ENCODE measurements at regions of chr2 and their contacts with region 1.

Region 1: DNA sequence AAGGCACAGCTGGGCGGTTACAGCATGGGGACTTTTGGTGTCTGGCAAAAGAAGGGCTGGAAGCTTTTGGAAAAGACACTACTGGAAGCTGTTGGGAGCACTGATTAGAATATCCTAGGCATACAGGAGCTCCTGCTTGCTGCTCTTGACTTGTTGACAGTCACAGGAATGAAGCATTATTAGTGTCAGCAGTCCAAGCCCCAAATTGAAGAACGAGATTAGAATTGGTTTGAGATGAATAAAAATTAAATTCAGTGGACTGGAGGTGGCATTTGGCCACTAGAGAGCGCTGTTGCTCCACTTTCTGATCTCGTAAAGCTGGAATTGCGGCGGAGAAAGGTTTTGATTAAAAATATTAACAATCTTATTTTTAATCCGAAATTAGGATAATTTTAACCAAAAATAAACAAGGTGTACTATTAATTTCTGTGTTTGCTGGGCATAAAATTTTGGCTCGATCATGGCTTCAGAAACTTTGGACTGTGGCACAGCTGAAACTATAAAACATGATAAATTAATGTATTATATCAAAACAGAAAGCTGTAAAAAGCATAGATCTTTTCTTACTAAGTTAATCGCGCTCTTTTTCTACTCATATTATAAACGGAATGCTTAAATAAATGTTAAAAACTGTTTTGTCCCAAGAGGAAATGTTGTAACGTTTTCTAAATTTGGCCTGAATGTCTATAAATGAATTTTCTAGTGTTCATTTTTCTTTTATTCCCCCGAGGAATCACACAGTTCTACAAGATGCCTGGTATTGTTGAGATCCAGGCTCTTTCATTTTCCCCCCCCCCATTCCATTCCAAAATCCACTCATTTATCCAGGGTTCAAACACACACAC is 2.4 kb upstream of the HOXD8 start:
- DNase-seq: peak; percentile 70
- ATAC-seq: no peak

Region 2: GRCh38 chr2:176638167-176639015 is 511.2 kb after region 1 on chr2:
- intact Hi-C with region 1: loop called (anchors 2 to 5 kb)
- DNase-seq: peak; percentile 74
- ATAC-seq: peak; percentile 94 to 95

Region 3: GRCh38 chr2:176653479-176654443 is 526.6 kb after region 1 on chr2:
- intact Hi-C with region 1: loop called in 1 of 2 experiments (anchors 1 kb)
- DNase-seq: peak; percentile 52
- ATAC-seq: peak; percentile 88 to 91

Region 4: DNA sequence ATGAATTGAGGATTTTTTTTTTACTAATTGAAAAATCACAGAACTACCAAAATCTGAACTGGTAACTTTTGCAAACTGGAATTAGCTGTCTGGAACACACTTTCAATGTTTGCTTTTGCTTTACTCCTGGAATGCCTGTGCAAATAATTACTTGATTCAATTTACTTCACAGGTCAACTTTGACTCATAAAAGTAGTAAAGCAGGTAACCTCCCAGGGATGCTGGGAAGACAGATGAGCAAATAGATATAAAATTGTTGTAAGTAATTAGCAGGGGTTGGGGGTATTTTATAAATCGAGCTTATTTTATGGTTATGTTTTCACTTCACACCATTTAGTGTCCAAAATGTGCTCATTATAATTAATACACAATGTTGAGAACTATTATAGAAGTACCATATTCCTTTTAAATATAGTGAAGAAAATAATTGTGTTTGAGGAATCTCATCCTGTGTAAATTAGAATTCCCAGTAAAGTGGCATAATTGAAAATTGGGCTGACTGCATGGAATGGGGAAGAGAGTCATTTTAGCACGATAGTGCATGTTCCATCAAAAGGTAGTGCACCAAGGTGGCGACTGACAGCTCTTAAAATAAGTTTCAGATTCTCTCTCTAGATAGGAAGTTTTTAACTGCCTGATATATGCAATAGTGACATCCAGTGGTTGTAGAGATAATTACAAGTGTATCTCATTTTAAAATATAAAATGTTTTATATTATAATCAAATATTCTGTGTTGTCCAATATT is 687.3 kb after region 1 on chr2:
- intact Hi-C with region 1: loop called in 1 of 2 experiments (anchors 10 kb)
- DNase-seq: no peak
- ATAC-seq: peak in 1 of 2 donors; percentile 38

Region 5: DNA sequence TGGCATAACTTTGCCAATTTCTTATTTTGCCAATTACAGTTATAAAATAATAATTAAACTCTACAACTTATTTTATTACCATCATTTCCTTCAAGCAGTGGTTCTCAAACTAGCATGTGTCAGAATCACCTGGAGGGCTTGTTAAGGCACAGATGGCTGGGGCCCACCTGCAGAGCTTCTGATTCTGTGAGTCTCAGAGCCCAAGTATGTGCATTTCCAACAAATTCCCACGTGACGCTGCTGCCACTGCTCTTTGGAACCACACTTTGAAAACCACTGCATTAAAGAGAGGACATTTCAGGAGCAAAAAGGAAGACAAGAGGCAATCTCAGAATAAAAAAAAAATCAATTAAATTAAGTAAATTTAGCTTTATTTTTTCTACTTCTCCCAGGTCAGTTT is 991.5 kb after region 1 on chr2:
- intact Hi-C with region 1: no loop called
- DNase-seq: no peak
- ATAC-seq: no peak

Region 6: DNA sequence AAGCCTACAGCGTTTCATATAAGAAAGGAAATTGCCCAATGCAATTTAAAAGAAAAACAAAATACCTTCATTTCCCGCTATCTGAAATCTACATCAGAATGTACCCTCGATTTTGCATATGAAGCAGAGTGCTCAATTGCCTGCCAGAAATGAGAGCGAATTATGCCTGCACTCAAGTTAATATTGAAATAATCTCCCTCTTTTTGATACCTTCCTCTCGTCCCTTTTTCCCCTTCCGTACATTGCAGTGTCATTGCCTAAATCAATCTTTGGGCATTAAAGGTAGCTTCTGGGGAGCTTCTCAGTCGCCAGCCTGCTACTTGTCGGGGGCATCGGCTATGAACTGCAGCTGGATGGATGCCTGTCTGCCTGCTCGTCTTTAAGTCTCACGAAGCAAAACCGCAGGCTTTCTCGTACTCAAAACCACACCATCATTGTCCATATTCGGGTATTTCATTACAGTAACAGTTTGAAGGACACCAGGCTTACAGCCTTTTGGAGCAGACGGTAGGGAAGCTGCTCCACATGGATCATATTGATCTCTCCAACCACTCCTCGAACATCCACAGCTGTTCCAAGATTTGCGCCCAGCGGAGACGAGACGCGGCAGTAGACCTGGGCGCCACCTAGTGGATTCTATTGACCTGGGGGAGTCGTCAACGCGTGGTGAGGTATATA is 1021.5 kb after region 1 on chr2:
- intact Hi-C with region 1: loop called (anchors 5 to 10 kb)
- DNase-seq: peak; percentile 79
- ATAC-seq: peak; percentile 87 to 93

Measured in left cardiac atrium (tissue), 4 donors.